Prostate gland (tissue), 2 donors: ENCODE measurements at regions of chr4 and their contacts with region 1.

Region 1: GRCh38 chr4:139083956-139084803 is 68.6 kb downstream of the NOCT start:
- DNase-seq: peak; percentile 83
- H3K4me3 ChIP-seq: peak overlapping the region; percentile 72 to 78
- H3K27ac ChIP-seq: peak overlapping the region; percentile 95 to 97
- H3K4me1 ChIP-seq: no peaks in the 10 kb centered on the region
- H3K27me3 ChIP-seq: no peaks in the 10 kb centered on the region
- CTCF ChIP-seq: peak in 3 of 4 experiments; percentile 28 to 53 (median 34)
- POLR2A ChIP-seq: peak; percentile 30

Region 2: DNA sequence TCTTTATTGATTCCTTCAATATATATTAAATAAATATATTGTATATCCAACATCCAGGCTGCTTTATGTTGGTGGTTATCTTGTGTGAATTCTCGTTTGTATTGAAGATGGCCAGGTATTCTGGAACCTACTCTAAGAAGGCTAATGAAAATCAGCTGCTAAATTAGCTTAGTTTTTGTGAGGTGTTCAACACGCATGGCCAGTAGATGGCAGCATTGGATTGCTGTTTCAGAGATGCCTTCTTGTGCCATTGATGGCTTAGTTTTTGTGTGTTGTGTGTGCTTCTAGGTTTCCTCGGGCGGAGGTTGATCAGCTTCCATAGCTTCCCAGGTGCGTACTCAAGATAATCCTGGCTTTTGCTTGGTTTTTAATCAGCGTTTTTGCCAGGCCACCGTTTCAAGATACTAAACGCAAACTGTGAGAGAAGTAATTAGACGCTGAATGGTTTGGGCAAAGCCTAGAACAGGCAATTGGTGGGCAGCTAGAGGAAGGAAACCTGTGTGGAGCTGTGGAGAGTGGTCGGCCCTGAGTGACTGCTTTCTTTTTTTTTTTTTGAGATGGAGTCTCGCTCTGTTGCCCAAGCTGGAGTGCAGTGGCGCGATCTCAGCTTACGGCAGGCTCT is 53.5 kb before region 1 on chr4:
- intact Hi-C with region 1: loop called (anchors 5 kb)
- DNase-seq: peak; percentile 82
- H3K4me3 ChIP-seq: no peak overlapping the region
- H3K27ac ChIP-seq: no peak overlapping the region
- H3K4me1 ChIP-seq: no peaks in the 10 kb centered on the region
- H3K27me3 ChIP-seq: no peaks in the 10 kb centered on the region
- CTCF ChIP-seq: peak; percentile 62 to 88 (median 84)
- POLR2A ChIP-seq: no peak

Region 3: GRCh38 chr4:139177868-139178611 is 93.9 kb after region 1 on chr4:
- intact Hi-C with region 1: loop called (anchors 2 kb)
- DNase-seq: peak; percentile 95
- H3K4me3 ChIP-seq: peak overlapping the region; percentile 97
- H3K27ac ChIP-seq: peak overlapping the region; percentile 100
- H3K4me1 ChIP-seq: no peaks in the 10 kb centered on the region
- H3K27me3 ChIP-seq: no peaks in the 10 kb centered on the region
- CTCF ChIP-seq: peak in 2 of 4 experiments; percentile 6 to 20
- POLR2A ChIP-seq: peak; percentile 93